Uterus (tissue), 4 donors: ENCODE measurements at regions of chr9 and their contacts with region 1.

Region 1: GRCh38 chr9:19127881-19128500 is 699 bp upstream of the PLIN2 start:
- DNase-seq: peak; percentile 36 to 44
- H3K4me3 ChIP-seq: peak overlapping the region; percentile 57 to 67
- H3K27ac ChIP-seq: peak overlapping the region; percentile 97 to 98
- H3K4me1 ChIP-seq: no peaks in the 10 kb centered on the region
- H3K27me3 ChIP-seq: no peaks in the 10 kb centered on the region
- CTCF ChIP-seq: no peak
- POLR2A ChIP-seq: no peak

Region 2: DNA sequence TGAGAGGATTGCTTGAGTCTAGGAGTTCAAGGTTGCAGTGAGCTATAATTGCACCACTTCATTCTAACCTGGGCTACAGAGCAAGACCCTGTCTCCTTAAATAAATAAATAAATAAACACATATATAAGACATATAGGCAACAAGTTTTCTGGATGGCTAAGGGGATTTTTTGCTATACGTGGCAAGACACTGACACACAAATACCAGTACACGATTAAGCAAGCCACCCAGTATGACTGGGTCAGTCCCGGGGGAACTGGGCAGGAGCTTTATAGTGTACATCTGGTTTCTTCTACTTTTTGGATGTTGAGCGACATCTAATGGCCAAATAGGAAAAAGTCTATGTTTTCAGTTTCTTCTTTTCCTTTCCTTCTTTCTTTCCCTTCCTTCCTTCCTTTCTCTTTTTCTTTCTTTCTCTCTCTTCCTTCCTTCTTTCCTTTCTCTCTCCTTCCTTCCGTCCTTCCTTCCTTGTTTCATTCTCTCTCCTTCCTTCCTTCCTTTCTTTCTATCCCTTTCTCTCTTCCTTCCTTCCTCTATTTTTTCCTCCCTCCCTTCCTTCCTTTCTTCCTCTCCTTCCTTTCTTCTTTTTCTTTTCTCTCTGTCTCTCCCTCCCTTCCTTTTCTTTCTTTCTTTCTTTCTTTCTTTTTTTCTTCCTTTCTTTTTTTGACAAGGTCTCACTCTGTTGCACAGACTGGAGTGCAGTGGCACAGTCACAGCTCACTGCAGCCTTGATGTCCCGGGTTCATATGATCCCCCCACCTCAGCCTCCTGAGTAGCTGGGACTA is 46.3 kb after region 1 on chr9:
- intact Hi-C with region 1: loop called (anchors 10 kb)
- DNase-seq: peak; percentile 68 to 80
- H3K4me3 ChIP-seq: no peak overlapping the region
- H3K27ac ChIP-seq: no peak overlapping the region
- H3K4me1 ChIP-seq: no peaks in the 10 kb centered on the region
- H3K27me3 ChIP-seq: no peaks in the 10 kb centered on the region
- CTCF ChIP-seq: peak; percentile 55 to 76 (median 60)
- POLR2A ChIP-seq: no peak